ENCODE measurements at regions of chr2 and their contacts with region 1.

Region 1: GRCh38 chr2:38602732-38603401 is at the start of gene HNRNPLL:
- DNase-seq: peak; percentile 99
- H3K4me3 ChIP-seq: peak within 1 kb of the TSS; percentile 93
- H3K27ac ChIP-seq: peak within 1 kb of the TSS; percentile 98
- H3K4me1 ChIP-seq: peaks cover 57% of the 10 kb centered on the region
- H3K27me3 ChIP-seq: no peaks in the 10 kb centered on the region
- CTCF ChIP-seq: no peak
- total RNA-seq, gene HNRNPLL: 26.3 TPM

Region 2: DNA sequence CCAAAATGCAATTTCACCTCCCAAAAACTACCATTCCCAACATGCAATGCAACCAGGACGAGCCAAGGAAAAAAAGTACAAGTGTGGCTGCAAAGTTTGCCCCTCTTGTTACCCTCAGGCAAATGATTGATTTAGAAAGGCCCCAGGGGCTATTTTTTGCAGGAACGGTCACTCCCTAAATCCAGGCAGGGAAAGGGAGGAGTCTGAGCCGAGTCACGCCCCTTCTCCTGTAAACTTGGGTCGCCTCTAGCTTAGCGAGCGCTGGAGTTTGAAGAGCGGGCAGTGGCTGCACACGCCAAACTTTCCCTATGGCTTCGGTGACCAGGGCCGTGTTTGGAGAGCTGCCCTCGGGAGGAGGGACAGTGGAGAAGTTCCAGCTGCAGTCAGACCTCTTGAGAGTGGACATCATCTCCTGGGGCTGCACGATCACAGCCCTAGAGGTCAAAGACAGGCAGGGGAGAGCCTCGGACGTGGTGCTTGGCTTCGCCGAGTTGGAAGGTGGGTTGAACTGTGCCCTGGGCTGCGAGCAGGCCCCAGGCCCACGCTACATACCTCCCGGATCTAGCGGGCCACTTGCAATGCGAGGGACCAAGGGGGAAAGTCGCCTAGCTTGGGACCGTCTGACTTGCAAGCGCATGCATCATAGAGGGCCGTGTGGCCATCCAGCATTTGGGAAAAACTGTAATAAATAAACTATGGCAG is 63.1 kb after region 1 on chr2 and contains the start of gene GALM:
- intact Hi-C with region 1: loop called (anchors 5 kb)
- DNase-seq: peak; percentile 80
- H3K4me3 ChIP-seq: peak within 1 kb of the TSS; percentile 74
- H3K27ac ChIP-seq: peak within 1 kb of the TSS; percentile 85
- H3K4me1 ChIP-seq: peaks cover 28% of the 10 kb centered on the region
- H3K27me3 ChIP-seq: no peaks in the 10 kb centered on the region
- CTCF ChIP-seq: no peak
- total RNA-seq, gene GALM: 14.4 TPM

Region 3: GRCh38 chr2:38815614-38816479 is 213.0 kb after region 1 on chr2:
- intact Hi-C with region 1: no loop called
- DNase-seq: no peak
- H3K4me3 ChIP-seq: no peak overlapping the region
- H3K27ac ChIP-seq: no peak overlapping the region
- H3K4me1 ChIP-seq: no peaks in the 10 kb centered on the region
- H3K27me3 ChIP-seq: no peaks in the 10 kb centered on the region
- CTCF ChIP-seq: no peak

Measured in left ventricle myocardium inferior (tissue), 1 donor.